HAP-1 (cell line): ENCODE measurements at regions of chr2 and their contacts with region 1.

Region 1: DNA sequence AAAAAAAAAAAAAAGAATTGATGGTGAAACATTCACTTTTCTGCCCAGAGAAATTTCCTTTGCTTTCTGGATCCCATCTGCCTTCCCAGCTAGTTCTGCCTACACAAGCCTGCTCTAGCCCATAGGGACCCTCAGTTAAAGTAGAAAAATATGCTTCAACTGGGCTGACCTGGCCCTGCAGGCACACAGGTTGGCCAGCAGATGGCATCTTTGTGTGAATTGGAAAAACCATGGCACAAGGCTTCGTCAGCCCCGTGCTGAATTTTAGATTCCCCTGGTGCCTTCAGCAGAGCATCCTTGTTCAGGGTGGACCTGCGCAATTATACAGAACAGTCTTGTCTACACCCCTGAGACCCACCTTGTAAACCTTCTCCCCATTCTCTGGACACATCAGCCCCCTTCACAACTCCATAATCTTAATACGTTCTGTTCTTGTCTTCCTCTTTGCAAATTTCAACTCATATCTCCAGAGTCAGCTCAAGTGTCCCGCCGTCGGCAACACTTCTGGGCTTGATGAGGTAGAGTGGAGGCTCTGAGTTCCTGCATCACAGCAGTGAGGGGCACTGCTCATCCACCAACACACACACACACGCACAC is 114.5 kb downstream of the INSIG2 start:
- DNase-seq: peak; percentile 37 to 72
- H3K4me3 ChIP-seq: no peak overlapping the region
- H3K4me1 ChIP-seq: no peaks in the 10 kb centered on the region
- H3K27me3 ChIP-seq: peaks cover 7% of the 10 kb centered on the region

Region 2: DNA sequence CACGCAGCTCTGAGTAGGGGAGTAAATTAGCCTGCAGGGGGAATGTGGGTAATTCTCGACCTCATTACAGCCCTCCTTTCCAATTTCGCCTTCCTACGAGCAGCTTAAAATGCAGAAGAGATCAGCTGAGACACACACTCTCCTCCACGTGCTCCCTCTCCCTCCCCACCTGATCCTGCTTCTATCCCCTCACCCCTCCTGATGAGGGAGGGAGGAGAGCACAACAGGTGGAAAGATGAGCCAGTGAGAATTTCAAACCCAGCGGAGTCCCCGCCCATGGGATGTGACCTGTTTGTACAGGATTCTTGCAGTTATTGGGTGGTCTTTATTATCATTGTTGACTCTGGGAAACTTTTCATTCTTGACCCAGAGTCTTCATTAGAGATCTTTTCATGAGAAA is 352.8 kb before region 1 on chr2:
- in situ Hi-C with region 1: no loop called
- DNase-seq: no peak
- H3K4me3 ChIP-seq: no peak overlapping the region
- H3K4me1 ChIP-seq: no peaks in the 10 kb centered on the region
- H3K27me3 ChIP-seq: no peaks in the 10 kb centered on the region; the same call in 1 of the 2 replicates

Region 3: GRCh38 chr2:118865106-118865505 is 662.3 kb after region 1 on chr2:
- in situ Hi-C with region 1: loop called (anchors 10 kb)
- DNase-seq: peak; percentile 49 to 64
- H3K4me3 ChIP-seq: no peak overlapping the region
- H3K4me1 ChIP-seq: no peaks in the 10 kb centered on the region
- H3K27me3 ChIP-seq: no peaks in the 10 kb centered on the region